ENCODE measurements at regions of chr3 and their contacts with region 1.

Region 1: GRCh38 chr3:151890721-151891141 is 17.3 kb downstream of the SUCNR1 start:
- DNase-seq: no peak

Region 2: GRCh38 chr3:151852074-151852811 is 38.5 kb before region 1 on chr3:
- intact Hi-C with region 1: no loop called
- DNase-seq: no peak

Region 3: DNA sequence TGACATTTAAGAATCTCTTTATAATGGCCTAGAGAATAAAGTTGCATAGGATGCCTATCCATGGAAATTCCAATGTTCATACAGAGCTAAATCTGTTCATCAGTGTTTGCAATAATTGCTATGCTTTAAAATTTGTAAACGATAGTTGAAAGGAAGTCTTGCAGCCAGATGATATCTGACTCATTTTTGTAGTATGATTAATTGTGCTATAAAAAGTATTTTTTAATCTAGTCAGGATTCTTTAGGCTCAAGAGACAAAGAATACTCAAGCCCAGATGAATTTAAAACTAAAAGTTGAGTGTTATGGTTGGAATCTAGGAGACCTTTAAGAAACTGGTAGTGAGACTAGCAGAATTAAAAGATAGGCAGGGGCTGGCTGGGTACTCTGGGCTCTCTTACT is 33.2 kb after region 1 on chr3:
- intact Hi-C with region 1: loop called in 1 of 2 experiments (anchors 1 kb)
- DNase-seq: no peak